ENCODE measurements at regions of chr15 and their contacts with region 1.

Region 1: DNA sequence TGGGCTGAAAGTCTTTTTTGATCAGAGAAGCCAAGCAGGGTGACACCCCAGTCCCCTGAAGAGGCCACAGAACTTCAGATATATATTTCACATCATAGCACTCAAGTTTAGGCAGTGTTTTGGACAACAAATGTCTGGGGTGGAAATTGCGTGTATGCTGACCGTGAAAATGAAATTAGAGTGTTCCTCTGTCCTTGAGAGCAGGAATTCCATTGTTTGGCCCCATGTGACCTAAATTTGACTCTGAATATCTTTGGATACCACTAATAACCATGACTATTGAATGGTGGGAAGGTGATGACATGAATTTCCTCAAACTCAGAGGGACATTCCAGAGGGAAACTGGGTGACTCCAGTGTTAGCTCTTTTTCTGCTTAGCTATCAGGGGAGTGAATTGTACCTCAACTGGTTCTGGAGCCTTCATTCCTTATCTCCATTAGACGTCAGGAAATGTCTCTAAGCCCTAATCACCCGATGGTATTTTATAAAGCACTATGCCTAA is 263.5 kb upstream of the RASGRP1 start:
- DNase-seq: no peak
- H3K4me3 ChIP-seq: no peak overlapping the region
- H3K27ac ChIP-seq: no peak overlapping the region
- H3K4me1 ChIP-seq: no peaks in the 10 kb centered on the region
- CTCF ChIP-seq: no peak

Region 2: DNA sequence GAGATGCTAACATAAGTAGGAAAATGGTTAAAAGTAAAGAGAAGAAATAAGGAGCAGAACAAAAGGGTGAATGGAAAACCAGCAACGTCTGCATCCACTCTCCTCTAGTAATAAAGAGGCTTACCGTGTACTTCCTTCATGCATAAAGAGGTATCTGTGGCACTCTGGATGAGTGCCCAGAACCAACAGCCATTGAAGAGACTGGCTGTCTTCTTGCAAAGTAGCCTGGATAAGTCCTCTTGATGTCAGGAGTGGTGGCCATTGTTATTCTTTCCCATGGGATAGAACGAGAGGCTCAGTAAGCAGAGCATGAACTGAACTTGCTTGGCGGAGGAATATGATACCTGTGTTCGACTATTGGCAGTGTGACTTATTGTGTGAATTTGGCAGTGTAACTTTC is 77.3 kb before region 1 on chr15:
- CTCF ChIA-PET with region 1: no interaction called
- POLR2A ChIA-PET with region 1: no interaction called
- intact Hi-C with region 1: no loop called
- DNase-seq: no peak
- H3K4me3 ChIP-seq: no peak overlapping the region
- H3K27ac ChIP-seq: no peak overlapping the region
- H3K4me1 ChIP-seq: no peaks in the 10 kb centered on the region
- CTCF ChIP-seq: no peak

Region 3: GRCh38 chr15:38768970-38769369 is 59.1 kb before region 1 on chr15:
- CTCF ChIA-PET with region 1: no interaction called
- POLR2A ChIA-PET with region 1: no interaction called
- intact Hi-C with region 1: loop called (anchors 10 kb)
- DNase-seq: no peak
- H3K4me3 ChIP-seq: no peak overlapping the region
- H3K27ac ChIP-seq: no peak overlapping the region
- H3K4me1 ChIP-seq: no peaks in the 10 kb centered on the region
- CTCF ChIP-seq: peak; percentile 37; the same call in 1 of the 2 replicates

Region 4: GRCh38 chr15:38961931-38962330 is 133.8 kb after region 1 on chr15:
- CTCF ChIA-PET with region 1: no interaction called
- POLR2A ChIA-PET with region 1: no interaction called
- intact Hi-C with region 1: no loop called
- DNase-seq: no peak
- H3K4me3 ChIP-seq: no peak overlapping the region
- H3K27ac ChIP-seq: no peak overlapping the region
- H3K4me1 ChIP-seq: no peaks in the 10 kb centered on the region
- CTCF ChIP-seq: no peak

Measured in OCI-LY7 (cell line).